ENCODE measurements at regions of chr20 and their contacts with region 1.

Region 1: DNA sequence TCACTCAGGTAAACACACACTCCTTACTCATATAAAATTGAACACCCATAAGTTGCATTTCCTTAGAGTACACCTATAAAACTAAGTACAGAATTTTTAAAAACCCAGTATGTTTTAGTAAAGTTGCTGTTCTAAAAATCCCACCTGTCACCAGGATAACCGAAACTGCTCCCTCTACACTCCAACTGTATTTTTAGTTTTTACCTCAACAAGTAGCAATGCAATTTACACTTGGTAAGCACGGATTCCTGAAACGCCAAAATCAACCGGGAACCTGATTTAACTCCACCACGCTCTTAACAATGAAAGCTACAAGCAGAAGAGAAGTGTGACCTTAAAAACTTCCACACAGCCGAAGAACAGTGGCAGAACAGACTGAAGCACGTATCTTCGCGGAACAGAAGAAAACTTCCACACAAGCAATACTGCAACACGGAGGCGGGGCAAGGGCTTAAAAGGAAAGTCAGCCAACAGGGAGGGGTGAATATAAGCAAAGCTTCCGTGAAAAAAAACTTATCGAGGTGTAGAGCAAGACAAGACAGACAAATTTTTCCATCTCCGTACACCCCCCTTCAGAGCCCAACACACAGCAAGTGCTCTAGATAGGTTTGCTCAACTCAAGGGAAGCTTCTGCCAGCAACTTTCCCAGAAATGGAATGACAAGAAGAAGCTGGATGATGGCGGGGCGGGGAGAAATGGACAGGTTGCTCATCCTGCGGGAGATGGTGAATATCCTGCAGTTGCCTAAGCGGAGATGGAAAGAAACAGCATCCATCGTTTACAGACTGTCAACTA is 1.4 kb downstream of the STAU1 start:
- DNase-seq: peak; percentile 32 to 68 (median 51)
- ATAC-seq: peak; percentile 7 to 41 (median 16)
- H3K4me3 ChIP-seq: peak overlapping the region; percentile 66 to 96 (median 86)
- H3K27ac ChIP-seq: peak overlapping the region; percentile 81 to 97 (median 92)
- H3K4me1 ChIP-seq: peaks cover 0 to 45% (median 30%) of the 10 kb centered on the region in 12 donors
- H3K27me3 ChIP-seq: no peaks in the 10 kb centered on the region
- CTCF ChIP-seq: no peak
- POLR2A ChIP-seq: no peak

Region 2: GRCh38 chr20:49046087-49046900 is 140.4 kb before region 1 on chr20 and contains the start of gene CSE1L:
- intact Hi-C with region 1: loop called in 1 of 10 experiments (anchors 5 kb)
- DNase-seq: peak; percentile 95 to 98 (median 96)
- ATAC-seq: peak; percentile 96 to 97 (median 97)
- H3K4me3 ChIP-seq: peak within 1 kb of the TSS; percentile 80 to 100 (median 95)
- H3K27ac ChIP-seq: peak within 1 kb of the TSS; percentile 70 to 98 (median 90)
- H3K4me1 ChIP-seq: peaks cover 0 to 30% (median 17%) of the 10 kb centered on the region in 12 donors
- H3K27me3 ChIP-seq: no peaks in the 10 kb centered on the region
- CTCF ChIP-seq: peak in 2 of 12 donors; percentile 12 to 23
- POLR2A ChIP-seq: peak in 1 of 2 donors; percentile 66
- total RNA-seq, gene CSE1L: 31.2 to 56.8 (median 41.9) TPM

Region 3: DNA sequence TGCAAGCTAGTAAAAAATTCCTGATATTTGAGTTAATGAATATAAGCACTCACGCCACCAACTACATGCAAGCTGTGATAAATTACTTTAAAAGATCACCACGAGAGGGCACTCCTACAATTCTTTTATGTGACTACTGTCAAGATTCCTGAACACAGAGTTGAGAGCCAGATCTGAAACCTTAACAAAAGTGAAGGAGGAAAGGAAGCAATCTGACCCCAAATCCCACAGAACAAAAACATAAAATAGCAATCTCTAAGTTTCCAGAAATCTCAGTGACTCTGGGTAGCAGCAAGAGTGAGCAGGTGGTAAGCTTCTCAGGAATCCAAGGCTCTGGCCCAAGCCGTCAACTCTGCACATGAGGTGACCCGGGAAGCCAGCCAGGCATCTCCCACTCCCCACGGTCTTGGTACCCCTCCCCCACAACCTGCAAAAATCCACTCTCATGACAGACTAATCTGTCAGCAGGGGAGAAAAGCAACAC is 53.7 kb before region 1 on chr20:
- intact Hi-C with region 1: loop called in 2 of 10 experiments (anchors 2 to 10 kb)
- DNase-seq: peak in 1 of 5 donors; percentile 35
- ATAC-seq: peak; percentile 58 to 81 (median 72)
- H3K4me3 ChIP-seq: no peak overlapping the region
- H3K27ac ChIP-seq: no peak overlapping the region
- H3K4me1 ChIP-seq: peaks cover 0 to 8% (median 0%) of the 10 kb centered on the region in 12 donors
- H3K27me3 ChIP-seq: no peaks in the 10 kb centered on the region
- CTCF ChIP-seq: peak; percentile 49 to 75 (median 60)
- POLR2A ChIP-seq: no peak

Region 4: GRCh38 chr20:49219089-49219923 is 32.6 kb after region 1 on chr20 and contains the start of gene DDX27:
- intact Hi-C with region 1: loop called in 3 of 10 experiments (anchors 1 to 2 kb)
- DNase-seq: peak; percentile 97 to 98 (median 97)
- ATAC-seq: peak; percentile 94 to 99 (median 98)
- H3K4me3 ChIP-seq: peak within 1 kb of the TSS; percentile 52 to 92 (median 82)
- H3K27ac ChIP-seq: peak within 1 kb of the TSS; percentile 74 to 98 (median 90)
- H3K4me1 ChIP-seq: peaks cover 0 to 29% (median 14%) of the 10 kb centered on the region in 12 donors
- H3K27me3 ChIP-seq: no peaks in the 10 kb centered on the region
- CTCF ChIP-seq: no peak
- POLR2A ChIP-seq: peak in 1 of 2 donors; percentile 74
- total RNA-seq, gene DDX27: 12.0 to 18.3 (median 13.4) TPM

Region 5: GRCh38 chr20:49278036-49278817 is 91.5 kb after region 1 on chr20 and contains the start of gene ZNFX1:
- intact Hi-C with region 1: loop called in 1 of 10 experiments (anchors 2 kb)
- DNase-seq: peak; percentile 99 to 100 (median 99)
- ATAC-seq: peak; percentile 93 to 97 (median 94)
- H3K4me3 ChIP-seq: peak within 1 kb of the TSS; percentile 64 to 90 (median 82)
- H3K27ac ChIP-seq: peak within 1 kb of the TSS; percentile 90 to 99 (median 96)
- H3K4me1 ChIP-seq: peaks cover 20 to 77% (median 47%) of the 10 kb centered on the region in 12 donors
- H3K27me3 ChIP-seq: no peaks in the 10 kb centered on the region
- CTCF ChIP-seq: peak in 3 of 12 donors; percentile 19 to 34 (median 26)
- POLR2A ChIP-seq: peak; percentile 86 to 98
- total RNA-seq, gene ZNFX1: 18.2 to 55.8 (median 26.8) TPM

Region 6: GRCh38 chr20:49446808-49447207 is 260.1 kb after region 1 on chr20:
- intact Hi-C with region 1: no loop called
- DNase-seq: peak; percentile 86 to 90 (median 87)
- ATAC-seq: peak; percentile 75 to 92 (median 78)
- H3K4me3 ChIP-seq: no peak overlapping the region
- H3K27ac ChIP-seq: peak overlapping the region; percentile 38 to 85 (median 54)
- H3K4me1 ChIP-seq: peaks cover 0 to 44% (median 26%) of the 10 kb centered on the region in 12 donors
- H3K27me3 ChIP-seq: peaks cover 0 to 15% (median 0%) of the 10 kb centered on the region in 9 donors
- CTCF ChIP-seq: peak in 6 of 12 donors; percentile 7 to 30 (median 16)
- POLR2A ChIP-seq: no peak

Measured in heart left ventricle (tissue), 16 donors.